Ascending aorta (tissue), 2 donors: ENCODE measurements at regions of chr10 and their contacts with region 1.

Region 1: DNA sequence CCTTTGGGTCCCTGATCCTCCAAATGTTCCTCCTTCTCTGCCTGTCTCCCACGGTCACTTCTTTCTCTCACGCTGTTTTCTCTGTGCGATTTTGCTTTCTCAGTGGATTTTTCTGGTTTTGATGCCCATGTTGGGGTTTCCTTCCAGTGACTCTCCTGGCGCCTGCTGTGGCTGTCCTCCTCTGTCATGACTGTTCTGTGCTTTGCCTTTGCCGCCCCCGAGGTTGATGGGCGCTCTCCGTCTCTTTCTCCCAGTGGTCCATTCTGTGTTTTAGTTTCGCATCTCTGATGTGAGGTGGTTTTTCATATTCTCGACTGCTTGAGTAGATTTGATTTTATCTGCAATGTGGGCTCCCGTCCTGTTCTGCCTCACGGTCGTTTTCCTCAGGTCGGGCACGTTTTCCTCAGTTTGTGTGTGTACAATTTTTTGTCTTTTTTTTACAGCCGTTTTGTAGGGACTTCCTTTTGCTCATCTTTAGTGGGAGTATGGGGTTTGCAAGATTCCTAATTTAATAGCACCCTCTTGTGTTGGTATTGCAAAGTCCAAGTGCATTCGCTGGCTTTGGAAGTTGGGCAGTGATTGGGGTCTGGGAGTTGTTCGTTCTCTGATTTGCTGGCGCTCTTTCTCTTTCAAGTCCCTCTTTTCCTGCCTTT is 100.0 kb downstream of the INPP5A start:
- DNase-seq: peak in 1 of 2 donors; percentile 62
- H3K4me3 ChIP-seq: no peak overlapping the region
- H3K27ac ChIP-seq: peak overlapping the region; percentile 45 to 50
- H3K4me1 ChIP-seq: peaks cover 15 to 38% of the 10 kb centered on the region in 2 donors
- H3K27me3 ChIP-seq: no peaks in the 10 kb centered on the region
- CTCF ChIP-seq: peak; percentile 62 to 81 (median 68)

Region 2: DNA sequence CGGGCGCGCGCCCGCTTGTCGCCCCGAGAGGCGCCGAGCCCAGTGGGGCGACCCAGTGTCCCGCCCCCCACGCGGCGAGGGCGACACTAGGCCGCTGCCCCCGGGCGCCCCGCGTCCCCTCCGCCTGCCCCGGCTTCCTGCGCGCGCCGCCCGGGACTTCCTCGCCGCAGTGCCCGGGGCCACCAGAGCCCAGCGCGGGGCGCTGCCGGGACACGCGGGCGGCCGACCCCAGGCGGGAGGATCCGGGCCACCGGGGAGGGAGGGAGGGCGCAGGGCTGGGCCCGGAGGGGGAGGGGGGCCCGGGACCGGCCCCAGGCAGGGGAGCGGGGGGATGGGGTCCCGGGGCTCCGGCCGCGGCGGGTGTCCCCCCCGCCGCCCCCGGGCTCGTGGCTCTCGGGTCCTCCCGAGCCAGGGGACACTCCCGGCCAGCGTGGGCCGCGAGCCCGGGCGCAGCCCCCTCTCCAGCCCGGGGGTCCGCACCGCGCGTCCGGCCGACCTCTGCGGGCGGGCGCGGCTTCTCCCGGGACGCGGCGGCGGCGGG is 241.0 kb before region 1 on chr10:
- intact Hi-C with region 1: loop called (anchors 2 kb)
- DNase-seq: peak in 1 of 2 donors; percentile 81
- H3K4me3 ChIP-seq: peak overlapping the region; percentile 74 to 90
- H3K27ac ChIP-seq: peak overlapping the region; percentile 91 to 95
- H3K4me1 ChIP-seq: peaks cover 3 to 26% of the 10 kb centered on the region in 2 donors
- H3K27me3 ChIP-seq: no peaks in the 10 kb centered on the region
- CTCF ChIP-seq: peak; percentile 13 to 53 (median 32)

Region 3: GRCh38 chr10:132458593-132459300 is 178.9 kb before region 1 on chr10:
- intact Hi-C with region 1: loop called (anchors 1 kb)
- DNase-seq: no peak
- H3K4me3 ChIP-seq: no peak overlapping the region
- H3K27ac ChIP-seq: no peak overlapping the region
- H3K4me1 ChIP-seq: peaks cover 5 to 6% of the 10 kb centered on the region in 2 donors
- H3K27me3 ChIP-seq: no peaks in the 10 kb centered on the region
- CTCF ChIP-seq: peak; percentile 93 to 99 (median 98)

Region 4: GRCh38 chr10:132508581-132509428 is 128.8 kb before region 1 on chr10:
- intact Hi-C with region 1: loop called (anchors 1 kb)
- DNase-seq: peak; percentile 35 to 88
- H3K4me3 ChIP-seq: no peak overlapping the region
- H3K27ac ChIP-seq: peak overlapping the region; percentile 25 to 26
- H3K4me1 ChIP-seq: peaks cover 0 to 5% of the 10 kb centered on the region in 2 donors
- H3K27me3 ChIP-seq: no peaks in the 10 kb centered on the region
- CTCF ChIP-seq: peak; percentile 60 to 71 (median 65)

Region 5: DNA sequence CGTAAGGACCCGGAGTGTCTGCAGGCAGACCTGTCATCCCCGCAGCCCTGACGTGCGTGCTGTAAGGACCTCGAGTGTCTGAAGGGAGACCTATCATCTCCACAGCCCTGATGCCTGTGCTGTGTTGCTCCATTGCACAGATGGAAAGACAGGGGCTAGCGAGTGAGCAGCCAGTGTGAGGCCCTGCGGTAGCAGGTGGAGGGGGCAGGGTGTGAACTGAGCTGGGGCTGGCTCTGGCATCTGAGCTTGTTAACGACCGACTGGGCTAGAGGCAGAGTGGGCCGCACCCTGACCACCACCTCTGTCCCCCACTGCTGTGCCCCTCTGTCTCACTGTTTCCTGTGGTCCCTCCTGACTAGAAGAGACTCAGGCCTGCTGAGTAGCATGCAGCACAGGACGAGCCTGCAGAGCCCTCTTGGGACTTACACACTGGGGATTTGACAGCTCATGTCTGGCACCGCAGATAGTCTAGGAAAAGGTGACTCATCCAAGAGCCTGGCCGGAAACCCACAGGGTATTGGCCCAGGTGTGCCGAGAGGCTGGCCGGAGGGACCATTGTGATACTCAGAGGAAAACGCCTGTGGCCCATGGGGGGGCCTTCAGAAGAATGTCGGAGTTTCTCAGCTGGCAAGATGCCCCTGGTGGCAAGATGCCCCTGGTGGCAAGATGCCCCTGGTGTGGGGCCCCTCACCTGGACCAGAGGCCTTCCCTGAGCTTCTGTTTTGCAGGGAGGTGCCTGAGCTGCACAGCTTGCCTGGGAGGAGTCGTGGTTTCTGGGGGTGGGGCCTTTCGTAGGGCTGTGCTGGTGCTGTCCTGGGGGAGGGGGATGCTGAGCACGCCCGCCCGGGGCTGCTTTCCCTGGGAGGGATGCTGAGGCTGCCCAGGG is 65.7 kb before region 1 on chr10:
- intact Hi-C with region 1: loop called (anchors 1 kb)
- DNase-seq: peak; percentile 48 to 84
- H3K4me3 ChIP-seq: peak overlapping the region in 1 of 2 donors; percentile 34
- H3K27ac ChIP-seq: peak overlapping the region; percentile 70 to 78
- H3K4me1 ChIP-seq: peaks cover 35 to 49% of the 10 kb centered on the region in 2 donors
- H3K27me3 ChIP-seq: no peaks in the 10 kb centered on the region
- CTCF ChIP-seq: no peak

Region 6: DNA sequence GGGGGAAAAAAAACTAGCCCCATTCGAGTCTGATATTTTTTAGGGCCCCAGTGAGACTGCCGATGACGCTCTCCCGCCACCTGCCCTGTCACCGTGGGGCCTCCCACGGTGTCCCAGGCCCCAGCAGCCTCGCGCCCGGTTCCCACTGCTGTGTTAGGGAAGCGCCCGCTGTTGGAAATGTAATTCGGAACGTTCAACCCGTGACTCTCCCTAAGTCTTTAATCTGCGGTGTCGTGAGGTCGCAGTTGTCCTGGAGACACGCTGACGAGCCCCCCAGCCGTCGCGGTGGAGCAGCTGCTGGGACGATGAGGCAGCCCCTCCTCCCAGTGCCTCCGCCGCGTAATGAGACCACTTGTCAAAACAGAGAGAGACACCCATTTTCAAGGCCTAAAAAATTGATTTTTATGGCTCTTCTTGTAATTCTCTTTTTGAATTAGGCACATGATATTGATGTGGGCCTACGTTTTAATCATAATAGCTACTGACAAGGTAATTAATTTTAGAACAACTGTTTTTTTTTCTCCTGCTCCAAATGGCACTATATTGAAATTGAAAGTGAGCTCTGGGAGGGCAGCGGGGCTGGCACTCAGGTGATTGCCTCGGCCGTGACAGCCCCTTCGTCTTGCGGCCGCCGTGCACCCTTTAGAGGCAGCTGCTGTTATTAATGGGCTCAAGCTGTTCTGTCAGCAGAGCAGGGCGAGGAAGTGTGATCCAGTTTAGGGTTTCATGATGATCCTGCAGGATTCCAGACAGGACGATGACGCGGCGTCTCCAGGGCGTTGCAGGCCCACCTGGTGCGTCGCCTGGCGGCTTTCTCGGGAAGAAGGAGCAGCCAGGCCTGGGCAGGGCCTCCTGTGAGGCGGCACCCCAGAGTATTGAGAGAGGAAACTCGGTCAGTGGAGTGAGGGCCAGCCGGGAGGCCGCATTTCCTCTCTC is 85.1 kb after region 1 on chr10:
- intact Hi-C with region 1: no loop called
- DNase-seq: no peak
- H3K4me3 ChIP-seq: no peak overlapping the region
- H3K27ac ChIP-seq: no peak overlapping the region
- H3K4me1 ChIP-seq: no peaks in the 10 kb centered on the region
- H3K27me3 ChIP-seq: no peaks in the 10 kb centered on the region
- CTCF ChIP-seq: no peak